ENCODE measurements at regions of chr5 and their contacts with region 1.

Region 1: GRCh38 chr5:90878549-90879196 is 320.1 kb downstream of the ADGRV1 start:
- DNase-seq: no peak
- H3K4me3 Mint-ChIP-seq: no peak overlapping the region
- H3K27ac Mint-ChIP-seq: no peak overlapping the region
- H3K4me1 Mint-ChIP-seq: peaks cover 5% of the 10 kb centered on the region
- H3K27me3 Mint-ChIP-seq: peaks cover 28% of the 10 kb centered on the region

Region 2: DNA sequence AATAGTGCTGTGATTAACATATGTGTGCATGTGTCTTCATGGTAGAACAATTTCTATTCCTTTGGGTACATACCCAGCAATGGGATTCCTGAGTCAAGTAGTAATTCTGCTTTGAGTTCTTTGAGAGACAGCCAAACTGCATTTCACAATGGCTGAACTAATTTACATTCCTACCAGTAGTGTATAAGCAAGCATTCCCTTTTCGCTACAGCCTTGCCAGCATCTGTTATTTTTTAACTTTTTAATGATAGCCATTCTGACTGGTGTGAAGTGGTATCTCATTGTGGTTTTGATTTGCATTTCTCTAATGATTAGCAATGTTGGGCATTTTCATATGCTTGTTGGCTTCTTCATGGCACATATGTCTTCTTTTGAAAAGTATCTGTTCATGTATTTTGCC is 195.9 kb after region 1 on chr5:
- CTCF ChIA-PET with region 1: no interaction called
- POLR2A ChIA-PET with region 1: no interaction called
- intact Hi-C with region 1: loop called (anchors 10 kb)
- DNase-seq: no peak
- H3K4me3 Mint-ChIP-seq: no peak overlapping the region
- H3K27ac Mint-ChIP-seq: no peak overlapping the region
- H3K4me1 Mint-ChIP-seq: peaks cover 9% of the 10 kb centered on the region
- H3K27me3 Mint-ChIP-seq: peaks cover 6% of the 10 kb centered on the region